Activated CD4-positive, alpha-beta memory T cell treated with anti-CD3 and anti-CD28 coated beads for 36 hours (primary cell): ENCODE measurements at regions of chr13 and their contacts with region 1.

Region 1: DNA sequence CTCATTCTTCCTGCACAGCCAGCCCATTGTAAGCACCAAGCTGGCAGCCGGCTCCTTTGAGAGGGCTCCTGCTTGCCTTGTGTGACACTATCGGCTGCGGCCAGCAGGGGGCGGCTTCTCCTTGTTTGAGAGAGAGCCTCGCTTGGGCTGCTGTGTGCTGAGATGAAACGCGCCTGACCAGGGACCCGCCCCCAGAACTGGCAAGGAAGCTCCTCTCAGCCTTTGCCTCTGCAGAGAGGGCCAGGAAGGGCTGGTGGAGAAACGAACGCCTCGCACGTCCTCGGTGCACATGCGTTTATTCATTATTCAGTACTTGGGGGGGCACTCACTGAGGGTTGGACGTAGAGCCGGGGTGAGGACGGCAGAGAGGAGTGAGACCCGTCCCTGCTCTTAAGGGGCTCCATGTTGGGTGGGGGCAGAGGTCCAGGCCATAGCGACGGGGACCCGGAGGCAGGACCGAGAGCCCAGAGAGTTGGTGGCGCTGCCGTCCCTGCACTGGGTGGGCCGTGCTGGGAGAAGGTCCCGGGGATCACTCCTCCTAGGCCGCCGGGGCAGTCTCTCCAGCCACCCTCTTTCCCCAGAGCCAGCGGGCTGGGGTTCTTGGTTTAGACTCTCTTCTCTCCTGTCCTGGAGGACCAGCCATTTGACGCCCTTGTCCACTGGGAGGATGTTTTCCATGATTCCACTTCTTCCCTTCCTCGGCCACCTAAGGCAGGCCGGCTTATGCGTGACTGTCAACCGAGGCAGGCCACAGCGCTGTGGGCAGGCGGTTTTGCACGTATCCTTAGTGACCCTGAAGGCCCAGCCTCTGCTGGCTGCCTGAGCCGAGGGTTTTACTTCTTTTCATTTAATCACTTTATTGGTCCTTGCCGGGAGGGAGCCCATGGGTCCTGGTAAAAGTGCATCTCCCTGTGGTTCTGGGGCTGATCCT is 174.5 kb downstream of the KATNAL1 start:
- DNase-seq: peak; percentile 98
- H3K4me3 Mint-ChIP-seq: no peak overlapping the region
- H3K27ac Mint-ChIP-seq: no peak overlapping the region
- H3K4me1 Mint-ChIP-seq: peaks cover 11% of the 10 kb centered on the region
- H3K27me3 Mint-ChIP-seq: no peaks in the 10 kb centered on the region

Region 2: GRCh38 chr13:29548722-29549121 is 584.2 kb before region 1 on chr13:
- CTCF ChIA-PET with region 1: no interaction called
- POLR2A ChIA-PET with region 1: no interaction called
- intact Hi-C with region 1: no loop called
- DNase-seq: no peak
- H3K4me3 Mint-ChIP-seq: no peak overlapping the region
- H3K27ac Mint-ChIP-seq: no peak overlapping the region
- H3K4me1 Mint-ChIP-seq: peaks cover 18% of the 10 kb centered on the region
- H3K27me3 Mint-ChIP-seq: no peaks in the 10 kb centered on the region

Region 3: DNA sequence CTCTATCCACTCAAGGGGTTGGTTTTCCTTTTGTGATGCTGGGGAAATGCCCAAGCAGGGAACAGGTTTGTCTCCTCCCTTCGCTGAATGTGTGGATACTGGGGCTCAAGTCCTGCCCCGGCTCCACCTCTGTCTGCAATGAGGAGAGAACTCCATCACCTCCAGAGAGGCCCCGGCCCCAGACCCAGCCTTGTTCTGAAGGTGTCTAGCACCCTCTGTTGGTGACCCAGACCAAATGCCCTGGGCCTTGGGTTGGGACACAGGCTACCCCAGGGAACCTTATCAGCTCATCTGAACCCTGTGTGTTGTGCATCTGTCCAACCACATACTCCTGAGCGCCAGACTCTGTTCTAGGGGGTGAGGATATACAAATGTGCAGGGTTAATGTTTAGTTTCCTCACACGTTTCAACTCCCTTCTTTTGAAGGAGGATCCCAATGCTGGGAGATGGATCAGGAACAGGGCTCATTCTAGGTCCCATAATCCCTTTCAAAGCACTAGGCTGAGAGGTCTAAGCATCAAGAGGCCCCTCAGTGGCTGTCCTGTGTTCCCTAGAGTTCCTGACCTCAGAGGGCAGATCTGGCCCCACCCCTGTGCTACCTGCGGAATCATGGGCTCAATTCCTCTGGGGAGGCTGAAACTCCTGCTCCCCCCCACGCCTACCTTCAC is 424.9 kb before region 1 on chr13:
- CTCF ChIA-PET with region 1: no interaction called
- POLR2A ChIA-PET with region 1: no interaction called
- intact Hi-C with region 1: no loop called
- DNase-seq: peak; percentile 63
- H3K4me3 Mint-ChIP-seq: no peak overlapping the region
- H3K27ac Mint-ChIP-seq: no peak overlapping the region
- H3K4me1 Mint-ChIP-seq: no peaks in the 10 kb centered on the region
- H3K27me3 Mint-ChIP-seq: peaks cover 6% of the 10 kb centered on the region

Region 4: GRCh38 chr13:30091691-30092090 is 41.2 kb before region 1 on chr13:
- CTCF ChIA-PET with region 1: no interaction called
- POLR2A ChIA-PET with region 1: no interaction called
- intact Hi-C with region 1: no loop called
- DNase-seq: no peak
- H3K4me3 Mint-ChIP-seq: no peak overlapping the region
- H3K27ac Mint-ChIP-seq: no peak overlapping the region
- H3K4me1 Mint-ChIP-seq: no peaks in the 10 kb centered on the region
- H3K27me3 Mint-ChIP-seq: no peaks in the 10 kb centered on the region

Region 5: GRCh38 chr13:30105381-30105780 is 27.5 kb before region 1 on chr13:
- CTCF ChIA-PET with region 1: no interaction called
- POLR2A ChIA-PET with region 1: no interaction called
- intact Hi-C with region 1: no loop called
- DNase-seq: no peak
- H3K4me3 Mint-ChIP-seq: no peak overlapping the region
- H3K27ac Mint-ChIP-seq: no peak overlapping the region
- H3K4me1 Mint-ChIP-seq: no peaks in the 10 kb centered on the region
- H3K27me3 Mint-ChIP-seq: peaks cover 1% of the 10 kb centered on the region

Region 6: DNA sequence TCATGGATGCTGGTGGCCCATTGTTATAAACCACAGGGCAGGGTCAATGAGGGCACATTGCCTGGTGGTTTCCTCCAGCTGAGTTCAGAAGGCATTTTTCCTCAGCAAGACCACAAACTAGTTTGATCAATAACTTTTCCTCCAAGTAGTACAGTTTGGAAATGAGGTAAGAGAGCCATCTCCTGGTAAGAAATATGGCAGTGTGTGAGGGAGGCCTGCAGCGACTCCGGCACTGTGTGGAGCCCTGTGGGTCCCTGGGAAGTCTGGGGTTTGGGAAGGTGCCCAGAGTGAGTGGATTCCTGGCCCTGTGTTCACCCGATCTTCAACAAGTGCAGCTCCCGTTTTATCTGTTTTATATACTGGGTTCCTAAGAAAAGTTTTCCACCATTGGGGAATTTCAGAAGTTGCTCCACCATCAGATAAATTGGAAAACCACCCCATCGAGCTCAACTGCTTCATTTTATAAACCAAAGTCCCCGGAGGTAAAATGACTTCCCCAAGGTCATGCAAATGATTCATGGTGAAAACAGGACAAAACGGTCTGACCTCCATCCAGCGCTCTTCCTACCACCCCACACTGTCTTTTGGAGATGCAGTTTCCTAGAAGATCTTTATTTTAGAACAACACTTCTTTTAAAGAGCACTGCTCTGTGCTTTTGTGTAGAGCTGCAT is 26.0 kb after region 1 on chr13:
- CTCF ChIA-PET with region 1: interaction called, 270 read pairs
- POLR2A ChIA-PET with region 1: interaction called, 6 read pairs
- intact Hi-C with region 1: loop called (anchors 1 kb)
- DNase-seq: peak; percentile 45
- H3K4me3 Mint-ChIP-seq: no peak overlapping the region
- H3K27ac Mint-ChIP-seq: peak overlapping the region; percentile 80
- H3K4me1 Mint-ChIP-seq: peaks cover 44% of the 10 kb centered on the region
- H3K27me3 Mint-ChIP-seq: no peaks in the 10 kb centered on the region

Region 7: GRCh38 chr13:30173303-30173610 is 40.4 kb after region 1 on chr13:
- CTCF ChIA-PET with region 1: interaction called, 13 read pairs
- POLR2A ChIA-PET with region 1: no interaction called
- intact Hi-C with region 1: no loop called
- DNase-seq: no peak
- H3K4me3 Mint-ChIP-seq: no peak overlapping the region
- H3K27ac Mint-ChIP-seq: no peak overlapping the region
- H3K4me1 Mint-ChIP-seq: peaks cover 13% of the 10 kb centered on the region
- H3K27me3 Mint-ChIP-seq: no peaks in the 10 kb centered on the region

Region 8: DNA sequence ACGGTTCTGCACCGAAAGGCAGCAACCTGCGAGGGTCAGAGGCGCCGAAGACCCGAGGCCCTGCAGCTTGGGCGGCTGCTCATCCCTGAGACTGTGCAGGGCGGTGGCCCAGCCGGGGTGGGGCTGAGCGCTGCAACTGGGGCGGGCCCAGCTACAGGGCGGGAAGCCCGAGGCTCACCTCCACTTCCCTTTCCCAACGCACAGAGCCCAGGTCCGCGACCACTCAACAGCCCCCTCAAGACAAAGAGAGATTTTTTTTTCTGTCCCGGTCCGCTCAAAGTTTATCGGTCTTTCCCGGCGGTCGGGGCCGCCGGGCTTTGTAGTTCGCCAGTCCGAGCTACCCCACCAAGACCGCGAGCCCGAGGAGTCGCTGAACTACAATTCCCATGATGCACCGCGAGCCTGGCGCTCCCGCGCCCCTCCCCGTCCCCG is 173.9 kb after region 1 on chr13:
- CTCF ChIA-PET with region 1: interaction called, 44 read pairs
- POLR2A ChIA-PET with region 1: no interaction called
- intact Hi-C with region 1: no loop called
- DNase-seq: peak; percentile 94
- H3K4me3 Mint-ChIP-seq: peak overlapping the region; percentile 84
- H3K27ac Mint-ChIP-seq: peak overlapping the region; percentile 87
- H3K4me1 Mint-ChIP-seq: peaks cover 49% of the 10 kb centered on the region
- H3K27me3 Mint-ChIP-seq: no peaks in the 10 kb centered on the region

Region 9: DNA sequence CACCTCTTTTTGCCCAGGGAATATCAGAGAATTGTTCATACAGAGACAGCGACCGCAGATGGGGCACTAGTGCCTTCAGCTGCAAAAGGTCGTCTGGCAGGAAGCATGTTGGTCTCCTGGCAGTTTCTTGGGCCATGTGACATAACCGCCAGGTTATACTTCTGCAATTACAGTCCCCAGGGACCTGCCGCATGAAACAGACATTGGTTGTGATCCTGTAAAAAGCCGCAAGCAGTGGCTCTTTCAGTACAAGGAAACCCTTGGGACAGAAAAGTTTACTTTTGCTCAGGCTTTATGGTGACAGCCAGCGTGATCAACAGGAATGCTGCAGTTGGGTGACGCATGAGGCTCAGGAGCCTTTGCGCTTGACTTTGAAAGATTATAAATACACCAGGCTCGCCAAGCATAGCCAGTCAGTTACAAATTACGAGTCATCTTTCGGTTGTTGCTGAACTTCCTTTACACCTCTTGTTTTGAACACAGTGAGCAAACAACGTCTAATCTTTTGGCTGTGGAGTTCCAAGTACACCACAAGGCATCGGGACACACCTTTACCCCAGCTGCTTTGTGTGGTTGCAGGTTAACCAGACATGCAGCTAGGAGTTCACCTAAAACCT is 238.9 kb after region 1 on chr13:
- CTCF ChIA-PET with region 1: interaction called, 14 read pairs
- POLR2A ChIA-PET with region 1: no interaction called
- intact Hi-C with region 1: no loop called
- DNase-seq: peak; percentile 84
- H3K4me3 Mint-ChIP-seq: peak overlapping the region; percentile 55
- H3K27ac Mint-ChIP-seq: peak overlapping the region; percentile 82
- H3K4me1 Mint-ChIP-seq: peaks cover 79% of the 10 kb centered on the region
- H3K27me3 Mint-ChIP-seq: no peaks in the 10 kb centered on the region

Region 10: DNA sequence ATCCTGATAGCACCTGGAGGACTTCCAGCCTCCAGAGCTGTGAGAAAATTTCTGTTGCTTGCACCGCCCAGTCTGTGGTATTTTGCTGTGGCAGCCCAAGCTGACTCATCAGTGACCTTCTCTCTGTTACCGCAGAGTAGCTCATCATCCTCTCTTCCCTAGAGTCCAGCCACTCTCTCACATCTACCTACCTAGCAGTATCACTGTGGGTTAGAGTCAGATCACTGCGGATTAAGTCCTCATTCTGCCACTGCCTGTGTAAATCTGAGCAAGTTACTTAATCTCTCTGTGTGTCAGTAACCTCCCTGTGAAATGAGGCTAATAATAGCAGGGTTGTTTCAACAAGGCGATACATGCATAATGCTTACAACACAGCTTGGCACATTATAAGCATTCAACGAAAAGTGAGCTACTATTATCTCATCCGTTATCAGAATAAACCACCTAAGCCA is 444.5 kb after region 1 on chr13:
- CTCF ChIA-PET with region 1: interaction called, 11 read pairs
- POLR2A ChIA-PET with region 1: no interaction called
- intact Hi-C with region 1: no loop called
- DNase-seq: peak; percentile 80
- H3K4me3 Mint-ChIP-seq: no peak overlapping the region
- H3K27ac Mint-ChIP-seq: peak overlapping the region; percentile 11
- H3K4me1 Mint-ChIP-seq: peaks cover 23% of the 10 kb centered on the region
- H3K27me3 Mint-ChIP-seq: peaks cover 1% of the 10 kb centered on the region

Region 11: DNA sequence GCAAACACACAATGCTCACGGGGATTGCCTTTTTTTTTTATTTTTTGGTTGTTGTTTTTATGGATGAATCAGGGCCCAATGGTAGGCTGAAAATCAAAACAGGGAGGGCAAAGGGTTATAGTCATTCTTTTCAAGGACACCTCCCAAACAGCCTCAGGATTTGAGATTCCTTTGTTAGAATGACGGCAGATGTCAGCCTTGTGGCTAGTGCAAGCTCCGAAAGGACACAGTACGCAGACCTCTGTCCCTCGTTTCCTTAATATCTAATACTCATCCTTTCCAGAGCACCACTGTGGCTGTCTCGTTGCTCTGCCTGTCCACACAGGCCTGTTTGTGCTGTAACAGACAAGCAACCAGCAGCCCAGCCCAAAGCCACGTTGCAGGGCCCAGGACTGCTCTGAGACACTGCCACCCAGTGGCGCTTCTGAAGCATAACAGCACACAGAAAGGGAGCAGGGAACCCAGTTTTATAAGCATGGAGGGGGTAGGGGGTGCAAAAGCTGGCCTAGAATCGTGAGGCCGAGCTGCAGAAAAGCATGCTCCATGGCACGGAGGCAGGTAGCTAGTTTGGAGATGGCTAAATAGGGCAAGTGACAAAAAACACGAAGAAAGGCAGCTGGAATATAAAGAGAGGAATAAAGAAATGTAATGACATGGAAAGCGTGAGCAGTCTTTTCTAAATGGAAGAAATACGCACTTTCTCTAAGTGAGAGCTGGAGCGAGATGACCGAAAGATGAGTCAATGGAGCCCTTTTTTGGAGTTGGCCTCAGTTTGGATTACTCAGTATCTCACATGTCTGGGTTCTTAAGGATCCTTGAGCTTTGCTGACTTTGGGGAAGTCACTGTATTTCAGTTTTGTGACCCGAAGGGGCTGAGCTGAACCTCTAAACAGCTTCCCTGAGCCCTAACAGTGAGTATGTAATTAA is 732.5 kb after region 1 on chr13:
- CTCF ChIA-PET with region 1: interaction called, 15 read pairs
- POLR2A ChIA-PET with region 1: no interaction called
- intact Hi-C with region 1: no loop called
- DNase-seq: peak; percentile 70
- H3K4me3 Mint-ChIP-seq: no peak overlapping the region
- H3K27ac Mint-ChIP-seq: no peak overlapping the region
- H3K4me1 Mint-ChIP-seq: peaks cover 7% of the 10 kb centered on the region
- H3K27me3 Mint-ChIP-seq: peaks cover 9% of the 10 kb centered on the region